Right ventricle myocardium superior (tissue), 1 donor: ENCODE measurements at regions of chr10 and their contacts with region 1.

Region 1: DNA sequence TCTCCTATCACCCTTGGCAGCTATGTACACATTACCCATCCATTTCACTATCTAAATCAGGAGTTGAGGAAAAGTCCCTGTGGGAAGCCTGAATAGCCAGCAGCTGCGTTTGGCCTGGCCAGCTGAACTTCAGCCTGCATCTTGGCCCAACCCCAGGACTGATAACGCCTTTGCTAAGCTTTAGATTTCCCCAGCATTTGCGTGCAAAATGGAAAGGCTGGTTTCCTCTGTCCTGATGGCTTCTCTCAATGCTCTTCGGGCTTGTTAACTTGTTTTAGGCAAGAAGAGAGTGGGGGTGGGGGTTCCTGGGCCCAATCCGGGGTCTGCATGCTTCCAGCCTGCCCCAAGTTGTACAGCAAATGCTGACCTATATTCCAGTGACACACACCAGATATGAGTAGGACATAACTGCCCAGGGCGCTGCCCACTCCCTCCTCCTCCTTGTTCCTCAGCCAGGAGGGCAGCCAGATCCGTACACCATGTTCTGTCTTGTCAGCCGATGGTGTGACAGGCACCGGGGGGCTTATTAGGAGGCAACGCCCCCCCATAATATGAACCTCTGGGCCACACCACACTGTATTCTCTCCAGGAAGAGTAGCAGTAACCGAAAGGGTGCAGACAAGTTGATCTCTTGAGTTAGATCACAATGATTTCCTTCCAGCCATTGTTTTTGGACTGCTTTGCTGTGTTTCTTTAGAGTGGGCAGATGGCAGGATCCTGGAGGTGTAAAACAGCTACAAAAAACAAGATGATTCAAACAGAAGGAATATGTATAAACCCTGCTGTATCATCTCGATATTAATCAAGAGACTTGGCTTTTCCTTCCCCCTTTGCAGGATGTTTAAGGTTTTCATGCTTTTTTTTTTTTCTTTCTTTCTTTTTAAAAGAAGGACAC is 339.0 kb downstream of the RNLS start:
- DNase-seq: peak; percentile 88
- ATAC-seq: peak; percentile 92

Region 2: DNA sequence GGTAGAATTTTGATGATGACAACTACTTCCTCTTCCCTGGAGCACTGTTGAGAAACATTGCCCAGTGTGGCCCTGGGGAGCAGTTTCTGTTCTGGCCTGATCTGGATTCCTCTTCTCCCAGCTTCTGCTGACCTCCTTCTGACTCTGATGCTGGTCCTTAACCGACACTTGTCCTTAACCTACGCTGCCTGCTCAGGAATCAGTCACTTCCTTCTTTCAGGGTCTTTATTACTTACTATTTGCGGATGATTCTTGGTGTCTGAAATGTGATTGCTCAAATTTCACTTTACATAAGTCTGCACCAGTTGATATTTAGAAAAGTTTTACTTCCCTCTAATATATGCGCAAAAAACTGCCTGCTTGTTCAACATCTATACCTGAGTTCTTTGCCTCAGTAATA is 216.5 kb before region 1 on chr10:
- intact Hi-C with region 1: no loop called
- DNase-seq: no peak
- ATAC-seq: peak; percentile 58

Region 3: GRCh38 chr10:88172159-88172558 is 71.9 kb before region 1 on chr10:
- intact Hi-C with region 1: no loop called
- DNase-seq: no peak
- ATAC-seq: no peak

Region 4: GRCh38 chr10:88386821-88387773 is 143.0 kb after region 1 on chr10:
- intact Hi-C with region 1: loop called (anchors 10 kb)
- DNase-seq: no peak
- ATAC-seq: peak; percentile 88

Region 5: DNA sequence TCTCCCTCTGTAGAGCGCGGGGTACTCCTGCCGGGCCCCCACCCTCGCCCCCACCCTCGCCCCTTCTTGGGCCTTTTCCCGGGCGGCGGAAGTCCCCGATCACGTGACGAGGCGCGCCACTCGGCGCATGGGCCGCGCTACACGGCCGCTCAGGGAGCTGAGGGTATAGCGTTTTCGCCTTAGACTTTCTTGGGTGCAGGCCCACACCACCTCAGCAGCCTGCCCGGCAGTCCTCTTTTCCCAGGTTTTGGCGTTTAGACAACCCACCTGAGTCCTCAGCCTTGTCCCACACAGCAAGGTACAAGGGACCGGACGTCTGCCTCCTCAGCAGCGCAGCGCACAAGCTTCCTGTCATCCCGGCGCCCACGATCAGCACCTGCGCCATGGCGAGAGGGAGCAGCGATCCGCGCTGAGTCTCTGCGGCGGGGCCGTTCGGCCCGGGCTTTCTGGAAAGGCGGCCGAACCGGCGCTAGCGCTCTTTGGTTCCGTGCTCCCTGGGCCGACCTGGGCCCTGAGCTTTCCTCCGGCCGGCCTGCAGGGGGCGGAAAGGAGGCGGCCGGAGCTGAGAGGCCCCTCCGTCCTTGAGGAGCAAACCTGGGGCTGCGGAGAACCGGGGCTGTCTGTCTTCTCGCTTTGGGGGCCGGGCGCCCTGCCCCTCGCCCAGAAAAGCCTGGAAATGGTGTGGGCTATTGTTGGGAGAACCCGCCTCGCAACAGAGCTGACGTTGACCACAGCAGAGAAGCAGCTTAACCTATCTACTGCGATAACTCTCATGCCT is 338.9 kb after region 1 on chr10 and contains the start of gene RNLS:
- intact Hi-C with region 1: no loop called
- DNase-seq: peak; percentile 85
- ATAC-seq: peak; percentile 98
- total RNA-seq, gene RNLS: 22.5 TPM